ENCODE measurements at regions of chr6 and their contacts with region 1.

Region 1: GRCh38 chr6:150813319-150813992 is 52.0 kb upstream of the MTHFD1L start:
- DNase-seq: no peak
- H3K4me3 ChIP-seq: no peak overlapping the region
- H3K4me1 ChIP-seq: no peaks in the 10 kb centered on the region; the same call in 1 of the 2 replicates
- H3K27me3 ChIP-seq: no peaks in the 10 kb centered on the region

Region 2: DNA sequence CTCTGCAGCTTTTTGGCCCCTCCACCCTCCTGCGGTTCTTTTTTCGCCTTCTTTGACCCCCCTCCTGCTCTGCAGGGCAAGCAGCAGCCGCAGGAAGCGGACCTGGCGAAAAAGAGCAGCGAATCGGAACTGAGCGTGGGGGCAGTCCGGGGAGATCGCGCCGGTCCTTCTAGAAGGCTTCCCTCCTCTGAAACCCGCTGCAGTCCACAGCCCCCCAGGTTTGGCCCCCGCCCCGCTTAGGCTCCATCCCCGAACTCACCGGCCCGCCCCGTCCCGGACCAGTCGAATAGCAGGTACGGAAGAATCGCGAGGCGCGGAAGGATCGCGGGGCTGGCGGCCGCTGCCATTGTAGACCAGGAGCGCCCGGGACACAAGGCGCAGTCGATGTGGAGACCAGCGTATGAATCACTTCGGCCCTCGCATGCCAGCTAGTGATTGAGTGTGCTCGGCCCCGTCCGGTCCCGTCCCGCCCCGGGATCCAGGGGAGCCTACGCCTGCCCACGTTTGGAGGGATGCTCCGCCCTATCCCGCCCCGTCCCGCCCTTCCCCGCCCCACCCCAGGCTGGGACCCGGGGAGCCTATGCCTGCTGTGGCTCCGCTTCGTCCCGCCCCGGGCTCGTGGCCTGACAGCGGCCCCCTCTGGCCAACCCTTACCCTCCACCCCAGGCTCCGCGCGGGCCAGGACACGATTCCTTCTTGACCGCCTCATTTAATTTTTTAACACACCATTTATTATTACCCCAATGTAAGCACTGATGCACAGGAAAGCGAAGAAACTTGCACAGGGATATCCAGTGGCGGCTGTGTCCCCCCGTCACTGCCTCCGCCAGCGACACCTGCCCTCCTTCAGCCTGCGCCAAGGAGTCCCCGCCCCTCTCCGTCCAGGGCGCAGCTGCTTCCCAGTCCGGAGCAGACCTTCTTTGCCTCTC is 744.5 kb before region 1 on chr6 and contains the start of gene ULBP3:
- in situ Hi-C with region 1: loop called (anchors 25 kb)
- DNase-seq: peak; percentile 88 to 95
- H3K4me3 ChIP-seq: peak within 1 kb of the TSS; percentile 75
- H3K4me1 ChIP-seq: peaks cover 7% of the 10 kb centered on the region
- H3K27me3 ChIP-seq: no peaks in the 10 kb centered on the region

Region 3: DNA sequence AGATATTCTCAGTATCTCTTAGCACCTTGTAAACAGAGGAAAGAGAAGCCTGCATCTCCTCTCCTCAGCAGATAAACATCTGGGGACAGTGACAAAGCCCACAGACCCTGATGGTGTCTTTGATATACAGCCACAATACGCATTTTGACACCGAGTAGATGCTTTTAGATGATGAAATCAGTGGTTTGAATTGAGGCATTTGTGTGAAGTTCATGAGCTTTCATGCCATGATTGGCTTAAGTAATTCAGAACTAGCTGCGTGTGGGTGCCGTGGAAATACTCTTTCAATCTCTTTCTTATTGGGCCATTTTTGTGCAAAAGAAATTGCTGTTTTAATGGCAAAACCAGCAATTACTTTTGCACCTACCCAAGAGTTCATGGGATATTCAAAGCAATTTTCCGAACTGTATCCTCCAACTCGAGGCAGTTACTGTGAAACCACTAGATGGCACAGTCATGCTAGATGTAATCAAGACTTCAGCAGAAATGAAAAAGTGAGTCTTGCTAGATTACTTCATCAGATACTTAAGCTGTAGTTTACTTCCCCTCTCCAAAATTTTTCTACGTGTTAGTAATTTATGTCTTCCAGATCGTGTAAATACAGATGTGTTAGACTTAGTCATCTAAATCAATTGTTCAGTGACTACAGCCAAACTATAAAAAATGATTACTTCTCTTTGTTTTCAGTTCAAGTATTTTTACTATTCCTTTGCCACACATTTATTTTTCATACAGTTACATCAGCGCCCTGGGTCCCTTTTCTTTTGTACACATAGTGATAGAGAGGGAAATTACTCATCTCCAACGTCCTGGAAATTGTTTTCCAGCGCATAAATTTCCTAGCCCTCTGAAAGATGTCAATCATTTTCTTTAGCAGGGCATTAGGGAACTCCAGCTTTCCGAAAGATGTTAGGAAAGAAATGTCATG is 395.3 kb before region 1 on chr6:
- in situ Hi-C with region 1: loop called (anchors 5 kb)
- DNase-seq: peak; percentile 55 to 88
- H3K4me3 ChIP-seq: no peak overlapping the region
- H3K4me1 ChIP-seq: peaks cover 23% of the 10 kb centered on the region
- H3K27me3 ChIP-seq: no peaks in the 10 kb centered on the region

Region 4: DNA sequence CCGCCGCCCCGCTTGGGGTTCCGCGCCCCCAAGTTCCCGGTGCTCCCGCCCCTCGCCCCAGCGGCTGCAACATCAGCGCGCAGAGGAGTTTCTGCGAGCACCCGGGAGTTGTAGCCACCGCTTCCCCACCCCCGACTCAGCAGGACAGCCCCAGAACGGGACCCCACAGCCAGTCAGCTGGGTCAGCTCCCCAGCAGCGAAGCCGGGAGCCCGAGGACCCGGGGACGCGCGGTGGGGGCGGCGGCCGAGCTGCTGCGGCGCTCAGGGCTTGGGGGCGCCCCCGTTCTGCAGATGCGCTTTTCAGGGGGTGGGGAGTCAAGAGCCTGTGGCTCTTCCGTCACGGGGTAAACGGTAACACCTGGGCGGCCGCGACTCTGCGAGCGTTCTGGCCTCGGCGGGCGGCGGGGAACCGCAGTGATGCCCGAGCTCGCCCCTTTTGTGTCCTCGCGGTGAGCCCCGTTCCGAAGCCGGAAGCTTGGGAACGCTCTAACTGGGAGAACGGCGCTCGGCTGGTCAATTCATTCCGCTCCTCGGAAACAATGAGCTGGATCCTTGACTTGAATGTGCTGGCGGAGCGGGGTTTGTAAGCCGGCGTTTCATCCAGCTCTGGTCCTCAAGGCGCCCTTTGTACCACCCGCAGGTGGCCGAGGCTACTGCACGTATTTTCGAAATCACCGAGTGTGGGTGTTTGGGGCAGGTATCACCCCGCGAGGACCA is 213.0 kb before region 1 on chr6:
- in situ Hi-C with region 1: loop called (anchors 10 kb)
- DNase-seq: peak; percentile 92 to 94
- H3K4me3 ChIP-seq: peak overlapping the region; percentile 73
- H3K4me1 ChIP-seq: peaks cover 23% of the 10 kb centered on the region
- H3K27me3 ChIP-seq: no peaks in the 10 kb centered on the region

Region 5: GRCh38 chr6:151229401-151230276 is 416.2 kb after region 1 on chr6:
- in situ Hi-C with region 1: no loop called
- DNase-seq: peak in 1 of 2 experiments; percentile 51
- H3K4me3 ChIP-seq: no peak overlapping the region
- H3K4me1 ChIP-seq: peaks cover 13% of the 10 kb centered on the region
- H3K27me3 ChIP-seq: no peaks in the 10 kb centered on the region

Measured in HAP-1 (cell line).